ENCODE measurements at regions of chrX and their contacts with region 1.

Region 1: GRCh38 chrX:72079607-72080006 is 52.1 kb downstream of the RTL5 start:
- DNase-seq: peak; percentile 47 to 62
- ATAC-seq: peak; percentile 81 to 96 (median 91)
- H3K4me3 ChIP-seq: peak overlapping the region in 9 of 10 donors; percentile 22 to 52 (median 43)
- H3K27ac ChIP-seq: peak overlapping the region; percentile 18 to 85 (median 73)
- H3K4me1 ChIP-seq: peaks cover 0 to 37% (median 10%) of the 10 kb centered on the region in 9 donors
- H3K27me3 ChIP-seq: peaks cover 0 to 66% (median 0%) of the 10 kb centered on the region in 7 donors
- CTCF ChIP-seq: no peak

Region 2: GRCh38 chrX:72018277-72019112 is 61.1 kb before region 1 on chrX:
- intact Hi-C with region 1: loop called in 1 of 10 experiments (anchors 10 kb)
- DNase-seq: peak; percentile 82 to 86
- ATAC-seq: peak; percentile 93 to 99 (median 98)
- H3K4me3 ChIP-seq: peak overlapping the region in 5 of 10 donors; percentile 20 to 45 (median 28)
- H3K27ac ChIP-seq: peak overlapping the region in 7 of 10 donors; percentile 34 to 66 (median 53)
- H3K4me1 ChIP-seq: peaks cover 0 to 24% (median 6%) of the 10 kb centered on the region in 9 donors
- H3K27me3 ChIP-seq: peaks cover 0 to 83% (median 0%) of the 10 kb centered on the region in 7 donors
- CTCF ChIP-seq: peak; percentile 61 to 89 (median 77)

Region 3: GRCh38 chrX:72121383-72121782 is 41.8 kb after region 1 on chrX:
- intact Hi-C with region 1: loop called in 3 of 10 experiments (anchors 5 to 10 kb)
- DNase-seq: peak; percentile 52 to 76
- ATAC-seq: peak; percentile 62 to 85 (median 80)
- H3K4me3 ChIP-seq: peak overlapping the region in 1 of 10 donors; percentile 4
- H3K27ac ChIP-seq: peak overlapping the region; percentile 16 to 87 (median 62)
- H3K4me1 ChIP-seq: peaks cover 5 to 61% (median 57%) of the 10 kb centered on the region in 9 donors
- H3K27me3 ChIP-seq: peaks cover 0 to 46% (median 0%) of the 10 kb centered on the region in 7 donors
- CTCF ChIP-seq: no peak

Region 4: GRCh38 chrX:72316408-72317110 is 237.0 kb after region 1 on chrX:
- intact Hi-C with region 1: no loop called
- DNase-seq: no peak
- ATAC-seq: no peak
- H3K4me3 ChIP-seq: no peak overlapping the region
- H3K27ac ChIP-seq: no peak overlapping the region
- H3K4me1 ChIP-seq: no peaks in the 10 kb centered on the region
- H3K27me3 ChIP-seq: peaks cover 0 to 65% (median 0%) of the 10 kb centered on the region in 7 donors
- CTCF ChIP-seq: no peak

Measured in heart right ventricle (tissue), 16 donors.